Activated B cell treated with CpG ODN at 0.5 μM for 24 hours (primary cell): ENCODE measurements at regions of chr4 and their contacts with region 1.

Region 1: GRCh38 chr4:83252782-83253405 is 31.7 kb downstream of the COQ2 start:
- DNase-seq: no peak
- ATAC-seq: peak; percentile 73
- H3K4me3 Mint-ChIP-seq: no peak overlapping the region
- H3K27ac Mint-ChIP-seq: peak overlapping the region; percentile 38
- H3K4me1 Mint-ChIP-seq: peaks cover 58% of the 10 kb centered on the region
- H3K27me3 Mint-ChIP-seq: no peaks in the 10 kb centered on the region
- CTCF ChIP-seq: peak; percentile 59

Region 2: DNA sequence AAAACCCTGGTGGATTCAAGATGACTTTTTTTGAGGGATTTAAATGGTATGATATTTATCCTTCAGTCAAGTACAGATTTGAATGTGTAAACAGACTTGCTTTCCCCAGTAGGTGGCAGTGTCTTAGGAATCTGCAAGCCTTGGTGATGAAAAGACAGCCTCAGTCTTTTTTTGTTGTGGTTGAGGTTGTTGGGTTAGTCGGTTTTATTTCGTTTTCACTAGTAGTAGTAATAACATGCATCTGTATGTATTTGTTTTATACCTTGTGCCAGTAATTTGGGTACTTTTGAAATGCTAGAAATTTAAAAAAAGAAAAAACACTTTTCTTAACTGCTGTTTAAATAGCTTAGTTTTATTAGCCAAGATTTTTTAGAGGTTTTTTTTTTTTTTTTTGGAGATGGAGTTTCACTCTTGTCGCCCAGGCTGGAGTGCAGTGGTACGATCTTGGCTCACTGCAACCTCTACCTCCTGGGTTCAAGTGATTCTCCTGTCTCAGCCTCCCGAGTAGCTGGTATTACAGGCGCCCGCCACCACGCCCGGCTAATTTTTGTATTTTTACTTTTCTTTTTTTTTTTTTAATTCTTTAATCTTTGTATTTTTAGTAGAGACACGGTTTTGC is 178.7 kb before region 1 on chr4:
- CTCF ChIA-PET with region 1: interaction called, 43 read pairs
- POLR2A ChIA-PET with region 1: interaction called, 5 read pairs
- intact Hi-C with region 1: loop called (anchors 1 kb)
- DNase-seq: no peak
- ATAC-seq: peak; percentile 81
- H3K4me3 Mint-ChIP-seq: peak overlapping the region; percentile 53
- H3K27ac Mint-ChIP-seq: peak overlapping the region; percentile 76
- H3K4me1 Mint-ChIP-seq: peaks cover 26% of the 10 kb centered on the region
- H3K27me3 Mint-ChIP-seq: no peaks in the 10 kb centered on the region
- CTCF ChIP-seq: peak; percentile 52

Region 3: DNA sequence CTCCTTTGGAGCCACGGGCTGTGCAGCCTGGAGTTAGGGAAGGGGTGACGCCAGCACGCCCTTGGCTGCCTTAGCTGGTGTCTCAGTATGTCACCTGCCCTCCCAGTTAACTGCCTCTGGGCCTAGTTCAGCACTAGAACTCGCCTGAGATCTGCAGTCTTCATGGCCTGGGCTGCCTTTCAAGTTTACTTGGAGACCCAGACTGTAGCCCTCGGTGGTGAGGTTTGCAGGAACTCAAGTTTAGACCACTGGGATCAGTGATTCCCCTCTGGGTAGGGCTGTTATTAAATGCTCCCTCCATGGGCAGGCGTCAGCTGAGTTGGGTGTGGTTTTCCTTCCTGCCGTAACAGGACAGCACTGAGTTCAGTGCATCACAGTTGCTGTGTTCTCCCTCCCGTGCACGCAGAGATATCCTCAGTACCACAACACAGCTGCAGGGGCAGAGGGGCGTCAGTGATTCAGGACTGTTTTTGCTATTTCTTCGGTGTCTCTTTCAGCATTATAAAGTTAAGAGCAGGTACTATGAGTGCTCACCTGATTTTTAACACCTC is 168.9 kb before region 1 on chr4:
- CTCF ChIA-PET with region 1: interaction called, 5 read pairs
- POLR2A ChIA-PET with region 1: interaction called, 4 read pairs
- intact Hi-C with region 1: loop called (anchors 1 kb)
- DNase-seq: peak; percentile 33
- ATAC-seq: peak; percentile 96
- H3K4me3 Mint-ChIP-seq: peak overlapping the region; percentile 57
- H3K27ac Mint-ChIP-seq: peak overlapping the region; percentile 90
- H3K4me1 Mint-ChIP-seq: peaks cover 50% of the 10 kb centered on the region
- H3K27me3 Mint-ChIP-seq: no peaks in the 10 kb centered on the region
- CTCF ChIP-seq: no peak

Region 4: DNA sequence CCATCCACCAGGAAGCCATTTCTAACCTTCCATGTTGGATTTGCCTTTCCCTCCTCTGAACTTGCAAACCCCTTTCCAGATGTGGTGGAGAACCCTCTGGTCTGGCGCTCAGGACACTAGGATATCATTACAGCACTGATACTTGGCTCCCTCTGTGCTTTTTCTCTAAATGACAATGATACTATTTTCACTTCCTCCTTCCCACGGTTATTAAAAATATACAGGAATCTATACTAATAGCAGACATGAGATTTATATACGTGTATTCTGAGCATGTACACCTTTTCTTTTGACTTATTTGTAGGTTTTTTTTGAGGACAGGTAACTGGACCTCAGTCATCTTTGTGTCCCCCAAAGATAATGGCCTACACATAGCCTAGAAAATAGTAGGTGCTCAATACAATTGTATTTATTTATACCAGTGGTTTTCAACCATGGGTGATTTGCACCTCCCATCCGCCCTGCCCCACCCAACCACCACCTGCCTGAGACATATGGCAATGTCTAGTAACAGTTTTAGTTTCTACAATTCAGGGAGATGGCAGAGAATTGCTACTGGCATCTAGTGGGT is 78.0 kb before region 1 on chr4:
- CTCF ChIA-PET with region 1: interaction called, 5 read pairs
- POLR2A ChIA-PET with region 1: interaction called, 7 read pairs
- intact Hi-C with region 1: loop called (anchors 2 kb)
- DNase-seq: peak; percentile 32
- ATAC-seq: peak; percentile 74
- H3K4me3 Mint-ChIP-seq: peak overlapping the region; percentile 83
- H3K27ac Mint-ChIP-seq: peak overlapping the region; percentile 94
- H3K4me1 Mint-ChIP-seq: peaks cover 88% of the 10 kb centered on the region
- H3K27me3 Mint-ChIP-seq: no peaks in the 10 kb centered on the region
- CTCF ChIP-seq: no peak